MCF 10A (cell line): ENCODE measurements at regions of chr16 and their contacts with region 1.

Region 1: GRCh38 chr16:84726079-84726668 is 26.4 kb downstream of the USP10 start:
- DNase-seq: peak; percentile 89
- H3K4me3 Mint-ChIP-seq: peak overlapping the region; percentile 28
- H3K27ac Mint-ChIP-seq: no peak overlapping the region
- H3K4me1 Mint-ChIP-seq: peaks cover 26% of the 10 kb centered on the region
- H3K27me3 Mint-ChIP-seq: no peaks in the 10 kb centered on the region
- CTCF ChIP-seq: peak; percentile 93

Region 2: GRCh38 chr16:84511180-84511824 is 214.9 kb before region 1 on chr16:
- CTCF ChIA-PET with region 1: interaction called, 20 read pairs
- POLR2A ChIA-PET with region 1: interaction called, 3 read pairs
- intact Hi-C with region 1: loop called (anchors 1 kb)
- DNase-seq: peak; percentile 86
- H3K4me3 Mint-ChIP-seq: no peak overlapping the region
- H3K27ac Mint-ChIP-seq: no peak overlapping the region
- H3K4me1 Mint-ChIP-seq: no peaks in the 10 kb centered on the region
- H3K27me3 Mint-ChIP-seq: no peaks in the 10 kb centered on the region
- CTCF ChIP-seq: peak; percentile 87

Region 3: GRCh38 chr16:84647828-84648594 is 78.2 kb before region 1 on chr16 and contains the start of gene KLHL36:
- CTCF ChIA-PET with region 1: interaction called, 8 read pairs
- POLR2A ChIA-PET with region 1: interaction called, 11 read pairs
- intact Hi-C with region 1: no loop called
- DNase-seq: peak; percentile 23
- H3K4me3 Mint-ChIP-seq: peak within 1 kb of the TSS; percentile 86
- H3K27ac Mint-ChIP-seq: peak within 1 kb of the TSS; percentile 66
- H3K4me1 Mint-ChIP-seq: peaks cover 24% of the 10 kb centered on the region
- H3K27me3 Mint-ChIP-seq: no peaks in the 10 kb centered on the region
- CTCF ChIP-seq: no peak
- total RNA-seq, gene KLHL36: 38.4 and 41.9 TPM in 2 replicates

Region 4: DNA sequence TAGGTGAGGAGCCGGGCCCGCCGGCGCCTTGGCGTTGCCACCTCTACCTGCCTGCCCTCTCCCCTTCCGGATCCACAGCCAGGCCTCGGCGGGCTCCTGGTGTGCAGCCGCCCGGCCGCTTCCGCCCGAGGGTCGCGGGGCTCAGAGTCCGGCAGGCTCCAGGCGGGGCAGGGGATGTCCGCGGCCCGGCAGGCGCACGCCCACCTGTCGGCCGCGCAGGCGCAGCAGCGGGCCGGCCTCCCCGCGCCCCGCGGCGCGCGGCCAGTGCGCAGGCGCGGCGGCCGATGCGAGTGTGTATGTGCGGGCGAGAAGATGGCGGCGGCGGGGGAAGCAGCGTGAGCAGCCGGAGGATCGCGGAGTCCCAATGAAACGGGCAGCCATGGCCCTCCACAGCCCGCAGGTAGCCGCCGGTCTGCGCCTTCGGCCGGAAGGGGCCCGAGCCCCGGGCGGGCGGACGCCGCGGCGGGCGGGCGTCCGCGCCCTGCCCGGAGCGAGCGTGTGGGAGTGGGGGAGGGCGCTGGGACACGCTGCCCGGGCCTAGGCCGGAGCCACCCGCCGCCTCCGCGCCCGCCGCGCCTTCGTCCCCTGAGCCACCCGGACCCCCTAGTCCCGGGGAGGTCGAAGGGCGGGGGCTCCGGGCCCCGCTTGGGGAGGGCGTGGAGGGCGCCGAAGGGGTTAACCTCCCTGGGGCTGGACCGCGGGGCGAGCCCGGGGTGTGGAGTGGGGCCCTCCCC is 26.3 kb before region 1 on chr16 and contains the start of gene USP10:
- CTCF ChIA-PET with region 1: interaction called, 30 read pairs
- POLR2A ChIA-PET with region 1: interaction called, 66 read pairs
- intact Hi-C with region 1: no loop called
- DNase-seq: peak; percentile 79
- H3K4me3 Mint-ChIP-seq: peak within 1 kb of the TSS; percentile 87
- H3K27ac Mint-ChIP-seq: peak within 1 kb of the TSS; percentile 85
- H3K4me1 Mint-ChIP-seq: peaks cover 10% of the 10 kb centered on the region
- H3K27me3 Mint-ChIP-seq: no peaks in the 10 kb centered on the region
- CTCF ChIP-seq: no peak
- total RNA-seq, gene USP10: 114 and 129 TPM in 2 replicates

Region 5: GRCh38 chr16:84810518-84811273 is 84.5 kb after region 1 on chr16:
- CTCF ChIA-PET with region 1: no interaction called
- POLR2A ChIA-PET with region 1: no interaction called
- intact Hi-C with region 1: no loop called
- DNase-seq: peak; percentile 94
- H3K4me3 Mint-ChIP-seq: no peak overlapping the region
- H3K27ac Mint-ChIP-seq: no peak overlapping the region
- H3K4me1 Mint-ChIP-seq: no peaks in the 10 kb centered on the region
- H3K27me3 Mint-ChIP-seq: peaks cover 33% of the 10 kb centered on the region
- CTCF ChIP-seq: no peak